Common myeloid progenitor, CD34-positive (primary cell): ENCODE measurements at regions of chr14 and their contacts with region 1.

Region 1: GRCh38 chr14:102539580-102540314 is 30.2 kb upstream of the ANKRD9 start:
- DNase-seq: no peak
- H3K4me3 ChIP-seq: no peak overlapping the region
- H3K27ac ChIP-seq: no peak overlapping the region
- H3K4me1 ChIP-seq: peaks cover 0 to 25% (median 19%) of the 10 kb centered on the region in 4 experiments
- H3K27me3 ChIP-seq: peaks cover 0 to 20% (median 5%) of the 10 kb centered on the region in 5 experiments

Region 2: DNA sequence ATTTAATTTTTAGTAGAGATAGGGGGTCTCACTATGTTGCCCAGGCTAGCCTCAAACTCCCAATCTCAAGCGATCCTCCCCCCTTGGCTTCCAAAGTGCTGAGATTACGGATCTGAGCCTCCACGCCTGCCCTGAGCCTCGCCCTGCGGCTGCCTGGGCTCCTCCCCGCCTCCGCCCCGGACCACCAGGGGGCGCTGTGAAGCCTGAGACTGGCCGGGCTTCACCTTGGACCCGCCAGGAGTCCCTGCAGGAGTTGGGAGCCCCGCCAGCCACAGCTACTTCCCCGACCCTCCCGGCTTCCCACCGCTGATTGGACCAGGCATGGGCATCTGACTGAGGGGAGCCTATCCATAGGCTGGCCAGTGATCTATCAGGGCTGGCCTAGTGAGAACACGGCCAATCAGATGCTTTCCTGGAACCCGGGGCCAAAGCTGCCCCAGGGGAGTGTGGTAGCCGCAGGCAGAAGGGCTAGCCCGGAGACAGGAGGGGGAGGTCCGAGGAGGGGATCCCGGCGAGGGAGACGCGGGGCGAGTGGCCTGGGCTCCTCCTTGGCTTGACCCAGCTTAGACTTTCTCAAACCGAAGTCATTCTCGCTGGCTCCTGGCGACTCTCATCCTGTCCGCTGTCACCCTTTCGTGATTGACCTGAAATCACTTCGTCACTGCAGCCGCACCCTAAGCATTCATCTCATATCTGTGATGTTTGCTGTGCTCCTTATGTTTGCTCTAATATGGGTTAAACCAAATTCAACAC is 15.1 kb before region 1 on chr14:
- CTCF ChIA-PET with region 1: interaction called, 12 read pairs
- POLR2A ChIA-PET with region 1: no interaction called
- DNase-seq: peak; percentile 96 to 98 (median 97)
- H3K4me3 ChIP-seq: peak overlapping the region; percentile 53 to 89 (median 79)
- H3K27ac ChIP-seq: peak overlapping the region in 1 of 2 experiments; percentile 63
- H3K4me1 ChIP-seq: peaks cover 3 to 27% (median 22%) of the 10 kb centered on the region in 4 experiments
- H3K27me3 ChIP-seq: no peaks in the 10 kb centered on the region